ENCODE measurements at regions of chr2 and their contacts with region 1.

Region 1: GRCh38 chr2:25567406-25567805 is 106.0 kb downstream of the DTNB start:
- H3K4me3 Mint-ChIP-seq: no peak overlapping the region
- H3K27ac Mint-ChIP-seq: peak overlapping the region; percentile 85
- H3K4me1 Mint-ChIP-seq: peaks cover 41% of the 10 kb centered on the region
- H3K27me3 Mint-ChIP-seq: no peaks in the 10 kb centered on the region

Region 2: GRCh38 chr2:25276569-25277465 is 290.6 kb before region 1 on chr2:
- intact Hi-C with region 1: loop called (anchors 10 kb)
- H3K4me3 Mint-ChIP-seq: peak overlapping the region; percentile 63
- H3K27ac Mint-ChIP-seq: peak overlapping the region; percentile 89
- H3K4me1 Mint-ChIP-seq: peaks cover 74% of the 10 kb centered on the region
- H3K27me3 Mint-ChIP-seq: no peaks in the 10 kb centered on the region

Region 3: DNA sequence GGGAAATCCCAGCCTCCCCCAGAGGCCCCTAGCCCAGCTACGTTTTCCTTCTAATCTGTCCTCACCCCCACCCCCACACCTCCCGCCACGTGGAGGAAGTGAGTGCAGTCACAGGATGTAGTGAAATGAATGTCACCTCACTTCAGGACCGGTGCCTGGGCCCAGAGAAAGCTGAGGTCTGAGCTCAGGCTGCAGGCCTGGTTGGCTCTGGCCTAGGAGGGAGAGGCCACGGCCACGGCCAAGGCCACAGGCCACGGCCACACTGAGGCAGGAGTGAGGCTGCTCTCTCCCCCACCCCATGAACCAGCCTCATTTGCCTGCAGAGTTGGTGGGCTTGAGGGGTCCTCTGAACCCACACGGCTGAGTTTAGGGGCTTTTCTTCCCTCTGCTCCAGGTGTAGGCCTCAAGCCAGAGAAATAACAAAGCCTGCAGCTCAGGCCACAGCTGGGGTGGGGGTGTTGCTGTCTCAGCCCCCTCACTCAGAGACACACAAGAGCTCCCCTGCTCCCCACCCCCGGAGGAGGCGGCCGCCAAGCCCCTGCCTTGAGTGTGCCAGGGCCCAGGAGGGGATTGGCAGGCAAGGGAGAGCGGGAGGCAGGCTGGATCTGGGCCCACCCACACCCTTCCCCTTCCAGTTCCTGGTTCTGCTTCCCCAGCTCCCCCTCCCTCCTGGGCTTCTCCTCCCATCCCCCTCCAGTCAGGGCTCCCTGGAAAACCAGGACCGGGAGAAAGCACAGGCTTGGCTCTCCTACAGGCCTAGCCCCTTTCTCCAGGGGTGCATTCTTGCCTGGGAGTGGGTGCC is 252.7 kb before region 1 on chr2:
- intact Hi-C with region 1: loop called (anchors 10 kb)
- H3K4me3 Mint-ChIP-seq: peak overlapping the region; percentile 9
- H3K27ac Mint-ChIP-seq: peak overlapping the region; percentile 82
- H3K4me1 Mint-ChIP-seq: peaks cover 61% of the 10 kb centered on the region
- H3K27me3 Mint-ChIP-seq: peaks cover 5% of the 10 kb centered on the region

Region 4: DNA sequence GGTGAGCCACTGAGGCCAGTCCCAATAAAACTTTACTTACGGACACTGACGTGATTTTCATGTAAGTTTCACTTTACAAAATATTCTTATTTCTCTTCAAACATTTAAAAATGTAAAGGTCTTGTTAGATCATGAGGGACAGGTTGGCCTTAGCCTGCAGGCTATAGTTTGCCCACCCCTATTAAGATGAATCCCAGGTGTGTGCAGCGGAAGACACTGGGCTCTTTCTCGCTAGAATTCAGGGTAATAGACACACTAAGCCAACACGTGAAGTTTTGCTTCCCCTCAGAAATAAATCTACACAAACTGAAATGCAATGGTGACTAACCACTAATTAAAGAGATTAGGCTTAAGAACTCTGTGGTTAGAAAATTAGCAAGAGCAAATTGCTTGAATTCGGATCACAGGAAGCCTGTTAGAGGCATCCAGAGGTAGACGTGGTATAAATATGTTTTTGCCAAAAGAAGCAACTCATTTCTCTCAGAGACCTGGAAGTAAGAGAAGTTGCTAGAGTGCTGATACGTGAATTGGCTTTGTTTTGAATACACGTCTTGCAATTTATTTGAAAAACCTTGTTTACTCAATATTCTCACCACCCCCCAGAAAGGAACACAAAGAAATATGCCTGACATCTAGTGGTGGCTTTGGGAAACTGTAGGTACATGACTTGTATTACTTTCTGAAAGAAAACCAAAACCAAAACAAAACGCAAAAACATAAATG is 45.6 kb before region 1 on chr2:
- intact Hi-C with region 1: loop called (anchors 5 kb)
- H3K4me3 Mint-ChIP-seq: peak overlapping the region; percentile 23
- H3K27ac Mint-ChIP-seq: peak overlapping the region; percentile 50
- H3K4me1 Mint-ChIP-seq: peaks cover 6% of the 10 kb centered on the region
- H3K27me3 Mint-ChIP-seq: no peaks in the 10 kb centered on the region

Region 5: DNA sequence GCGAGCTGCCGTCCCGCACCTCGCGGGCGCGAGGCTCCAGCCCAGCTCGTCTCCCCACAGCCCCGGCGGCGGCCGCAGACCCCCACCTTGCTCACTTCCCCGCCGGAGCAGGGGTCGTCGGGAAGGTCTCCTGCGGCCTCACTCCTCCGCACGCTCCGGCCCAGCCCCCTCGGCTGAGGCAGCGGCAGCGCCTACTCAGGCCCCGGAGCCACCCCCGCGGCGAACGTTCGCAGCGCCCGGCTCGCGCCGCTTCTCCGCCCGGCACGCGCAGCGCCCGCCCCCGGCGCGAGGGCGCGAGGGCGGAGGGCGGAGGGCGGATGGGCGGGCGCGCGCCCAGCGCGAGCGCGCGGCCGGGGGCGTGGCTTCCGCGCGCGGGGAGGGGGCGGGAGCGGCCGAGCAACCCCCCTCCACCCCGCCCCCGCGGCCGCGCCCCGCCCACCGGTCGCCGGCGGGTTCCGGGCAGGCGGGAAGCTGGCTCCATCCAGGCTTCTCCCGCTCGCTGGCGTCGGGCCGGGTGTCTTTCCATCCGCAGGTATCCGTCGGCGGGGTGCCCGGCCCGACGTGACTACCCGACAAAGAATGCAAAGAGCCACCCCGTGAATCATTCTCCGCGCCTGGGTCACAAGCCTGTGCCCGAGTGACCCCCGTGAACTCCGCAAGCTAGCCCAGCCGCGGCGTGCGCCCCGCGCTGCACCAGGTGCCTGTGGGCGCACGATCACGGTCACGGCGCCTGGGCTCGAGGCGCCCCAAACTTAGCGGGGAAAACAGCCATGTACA is 106.1 kb after region 1 on chr2 and contains the start of gene DTNB:
- intact Hi-C with region 1: no loop called
- H3K4me3 Mint-ChIP-seq: peak within 1 kb of the TSS; percentile 82
- H3K27ac Mint-ChIP-seq: peak within 1 kb of the TSS; percentile 83
- H3K4me1 Mint-ChIP-seq: peaks cover 38% of the 10 kb centered on the region
- H3K27me3 Mint-ChIP-seq: peaks cover 33% of the 10 kb centered on the region

Region 6: GRCh38 chr2:25714740-25715139 is 147.3 kb after region 1 on chr2:
- intact Hi-C with region 1: no loop called
- H3K4me3 Mint-ChIP-seq: no peak overlapping the region
- H3K27ac Mint-ChIP-seq: no peak overlapping the region
- H3K4me1 Mint-ChIP-seq: peaks cover 14% of the 10 kb centered on the region
- H3K27me3 Mint-ChIP-seq: peaks cover 3% of the 10 kb centered on the region